ENCODE measurements at regions of chr3 and their contacts with region 1.

Region 1: GRCh38 chr3:42190701-42191462 is 75.1 kb downstream of the CCK start:
- DNase-seq: peak; percentile 51
- H3K4me3 ChIP-seq: no peak overlapping the region
- H3K27ac ChIP-seq: no peak overlapping the region
- H3K4me1 ChIP-seq: peaks cover 7% of the 10 kb centered on the region
- H3K27me3 ChIP-seq: no peaks in the 10 kb centered on the region
- CTCF ChIP-seq: peak; percentile 90 to 93

Region 2: DNA sequence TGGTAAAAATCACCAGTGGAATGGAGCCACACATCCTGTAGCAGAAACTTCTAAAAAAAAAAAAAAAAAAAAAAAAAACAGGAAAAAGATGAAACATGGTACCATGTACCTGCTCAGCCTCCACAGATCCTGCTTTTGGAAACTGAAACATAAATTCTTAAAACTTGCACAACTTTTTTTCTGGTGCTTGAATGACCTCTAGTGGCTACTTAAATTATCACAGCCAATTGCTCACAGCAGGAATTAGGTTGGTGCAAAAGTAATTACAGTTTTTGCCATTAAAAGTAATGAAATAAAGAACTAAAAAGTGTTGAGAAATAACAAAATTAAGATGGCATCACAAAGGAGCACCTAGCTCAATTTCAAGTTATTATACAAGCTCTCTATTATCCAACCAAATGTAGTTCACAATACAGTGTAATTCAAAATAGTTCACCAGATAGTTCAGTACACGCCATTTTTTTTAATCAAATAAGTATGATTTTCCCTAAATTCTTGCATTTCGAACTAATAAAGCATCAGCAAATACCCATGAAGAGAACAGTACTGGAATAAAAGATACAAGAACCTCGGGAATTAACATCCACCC is 309.6 kb before region 1 on chr3:
- CTCF ChIA-PET with region 1: no interaction called
- dilution Hi-C with region 1: no loop called
- in situ Hi-C with region 1: loop called in 1 of 2 experiments (anchors 25 kb)
- intact Hi-C with region 1: no loop called
- DNase-seq: peak; percentile 29
- H3K4me3 ChIP-seq: no peak overlapping the region
- H3K27ac ChIP-seq: no peak overlapping the region
- H3K4me1 ChIP-seq: no peaks in the 10 kb centered on the region
- H3K27me3 ChIP-seq: no peaks in the 10 kb centered on the region
- CTCF ChIP-seq: peak; percentile 54 to 55

Region 3: GRCh38 chr3:41893977-41894376 is 296.9 kb before region 1 on chr3:
- CTCF ChIA-PET with region 1: no interaction called
- dilution Hi-C with region 1: no loop called
- in situ Hi-C with region 1: loop called in 1 of 2 experiments (anchors 25 kb)
- intact Hi-C with region 1: loop called (anchors 1 kb)
- DNase-seq: peak; percentile 36
- H3K4me3 ChIP-seq: no peak overlapping the region
- H3K27ac ChIP-seq: no peak overlapping the region
- H3K4me1 ChIP-seq: no peaks in the 10 kb centered on the region
- H3K27me3 ChIP-seq: no peaks in the 10 kb centered on the region
- CTCF ChIP-seq: peak; percentile 29 to 54

Region 4: DNA sequence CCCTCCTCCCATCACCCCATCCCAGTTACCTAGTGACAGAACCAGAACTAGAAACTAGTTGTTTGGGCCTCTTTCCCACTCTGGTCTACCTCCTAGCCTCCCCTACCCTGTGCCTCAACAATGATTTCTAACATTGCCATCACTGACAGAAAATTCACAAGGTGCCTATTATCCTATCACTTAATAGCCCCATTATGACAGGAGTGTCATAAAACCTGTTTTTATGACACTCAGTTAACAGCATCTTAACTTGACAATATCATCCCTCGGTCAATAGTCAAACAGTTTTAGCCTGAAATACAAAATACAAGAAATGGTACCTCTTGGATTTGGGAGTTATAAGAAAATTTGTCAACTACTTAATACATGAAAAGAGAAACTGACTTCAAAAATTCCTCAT is 275.5 kb before region 1 on chr3:
- CTCF ChIA-PET with region 1: no interaction called
- dilution Hi-C with region 1: loop called (anchors 10 kb)
- in situ Hi-C with region 1: loop called in 1 of 2 experiments (anchors 10 kb)
- intact Hi-C with region 1: no loop called
- DNase-seq: no peak
- H3K4me3 ChIP-seq: no peak overlapping the region
- H3K27ac ChIP-seq: no peak overlapping the region
- H3K4me1 ChIP-seq: no peaks in the 10 kb centered on the region
- H3K27me3 ChIP-seq: no peaks in the 10 kb centered on the region
- CTCF ChIP-seq: no peak

Region 5: GRCh38 chr3:41997702-41998550 is 193.0 kb before region 1 on chr3:
- CTCF ChIA-PET with region 1: no interaction called
- dilution Hi-C with region 1: no loop called
- in situ Hi-C with region 1: no loop called
- intact Hi-C with region 1: loop called (anchors 10 kb)
- DNase-seq: no peak
- H3K4me3 ChIP-seq: no peak overlapping the region
- H3K27ac ChIP-seq: no peak overlapping the region
- H3K4me1 ChIP-seq: peaks cover 3% of the 10 kb centered on the region
- H3K27me3 ChIP-seq: no peaks in the 10 kb centered on the region
- CTCF ChIP-seq: peak; percentile 43 to 44

Region 6: DNA sequence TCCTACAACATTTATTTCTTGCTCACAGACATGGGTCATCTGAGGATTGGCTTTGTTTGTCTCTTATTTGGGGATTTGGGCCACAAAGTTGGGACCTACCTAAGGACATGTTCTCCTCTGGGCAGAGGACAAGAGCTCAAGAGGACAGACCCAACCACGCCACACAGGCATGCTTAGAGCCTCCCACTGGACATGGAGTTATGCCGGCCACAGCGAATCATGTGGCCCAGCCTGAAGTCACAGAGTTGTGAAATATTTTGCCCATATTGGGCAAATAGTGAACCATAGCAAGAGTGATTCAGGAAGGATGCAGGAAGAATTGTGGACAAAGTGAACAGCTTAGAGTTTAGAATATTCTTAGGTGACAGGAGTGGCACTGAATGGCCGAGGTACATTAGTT is 89.8 kb before region 1 on chr3:
- CTCF ChIA-PET with region 1: no interaction called
- dilution Hi-C with region 1: loop called (anchors 5 kb)
- in situ Hi-C with region 1: no loop called
- intact Hi-C with region 1: no loop called
- DNase-seq: peak; percentile 72
- H3K4me3 ChIP-seq: no peak overlapping the region
- H3K27ac ChIP-seq: no peak overlapping the region
- H3K4me1 ChIP-seq: peaks cover 37% of the 10 kb centered on the region
- H3K27me3 ChIP-seq: no peaks in the 10 kb centered on the region
- CTCF ChIP-seq: no peak

Region 7: DNA sequence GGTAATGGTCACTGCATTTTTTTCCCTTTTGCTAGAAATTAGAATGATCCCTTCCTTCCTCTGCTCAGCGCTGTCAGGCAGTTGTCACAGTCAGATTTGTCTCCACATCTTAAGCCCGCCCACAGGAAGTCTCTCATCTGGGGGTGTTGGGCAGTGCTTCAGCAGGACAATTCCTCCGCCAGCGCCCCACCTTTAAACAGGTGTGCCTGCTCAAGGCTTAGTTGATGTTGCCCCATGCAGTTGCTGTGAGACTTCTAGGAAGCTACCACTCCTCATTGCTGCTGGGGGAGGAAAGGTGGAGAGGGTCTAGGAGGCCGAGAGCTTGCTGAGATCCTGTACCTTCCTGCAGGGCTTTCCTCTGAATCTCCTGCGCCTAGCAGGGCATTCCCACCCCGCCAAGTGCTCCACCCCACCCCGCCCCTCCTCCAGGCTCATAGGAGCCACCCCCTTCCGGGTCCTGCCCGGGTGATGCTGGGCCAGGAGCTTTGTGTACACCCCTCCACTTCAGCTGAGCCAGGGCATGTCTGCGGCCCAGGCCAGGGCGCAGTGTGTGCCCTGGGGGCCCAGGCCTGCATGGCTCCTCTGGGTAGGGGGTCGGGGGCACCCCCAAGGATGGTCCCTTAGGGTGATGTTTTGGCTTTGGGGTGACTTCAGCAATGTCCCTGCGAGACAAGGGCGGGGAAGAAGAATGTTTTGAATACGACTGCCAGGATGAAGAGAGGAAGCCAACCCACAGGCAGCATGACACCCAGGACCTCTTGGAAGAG is 31.0 kb before region 1 on chr3:
- CTCF ChIA-PET with region 1: no interaction called
- dilution Hi-C with region 1: no loop called
- in situ Hi-C with region 1: no loop called
- intact Hi-C with region 1: loop called (anchors 1 kb)
- DNase-seq: peak; percentile 79
- H3K4me3 ChIP-seq: peak overlapping the region; percentile 44 to 59 (median 52)
- H3K27ac ChIP-seq: peak overlapping the region; percentile 76
- H3K4me1 ChIP-seq: peaks cover 32% of the 10 kb centered on the region
- H3K27me3 ChIP-seq: no peaks in the 10 kb centered on the region
- CTCF ChIP-seq: no peak

Region 8: GRCh38 chr3:42229942-42230688 is 39.2 kb after region 1 on chr3:
- CTCF ChIA-PET with region 1: no interaction called
- dilution Hi-C with region 1: no loop called
- in situ Hi-C with region 1: no loop called
- intact Hi-C with region 1: no loop called
- DNase-seq: peak; percentile 45
- H3K4me3 ChIP-seq: no peak overlapping the region
- H3K27ac ChIP-seq: no peak overlapping the region
- H3K4me1 ChIP-seq: peaks cover 9% of the 10 kb centered on the region
- H3K27me3 ChIP-seq: no peaks in the 10 kb centered on the region
- CTCF ChIP-seq: peak; percentile 51 to 65

Measured in mammary epithelial cell (primary cell).